ENCODE measurements at regions of chr17 and their contacts with region 1.

Region 1: DNA sequence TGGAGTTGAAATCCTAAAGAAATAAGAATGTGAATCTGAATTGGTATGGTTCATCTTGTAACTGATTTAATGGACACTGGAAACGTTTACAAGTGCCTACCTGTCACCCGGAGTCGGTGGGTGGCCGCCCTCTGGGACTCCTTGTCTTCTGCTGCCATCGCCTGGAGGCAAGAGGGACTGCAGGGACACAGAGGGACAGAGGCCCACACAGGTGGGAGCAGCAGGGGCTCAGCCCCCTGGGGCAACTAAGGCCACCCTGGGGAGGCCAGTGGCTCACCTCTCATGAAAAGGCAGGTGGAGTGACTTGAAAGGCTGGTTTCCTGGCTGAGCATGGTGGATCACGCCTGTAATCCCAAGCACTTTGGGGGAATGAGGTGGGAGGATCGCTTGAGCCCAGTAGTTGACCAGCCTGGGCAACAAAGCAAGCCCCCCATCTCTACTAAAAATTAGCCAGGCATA is 23.2 kb downstream of the TMEM92 start:
- DNase-seq: peak; percentile 67
- ATAC-seq: peak; percentile 100
- H3K4me3 Mint-ChIP-seq: no peak overlapping the region
- H3K27ac Mint-ChIP-seq: no peak overlapping the region
- H3K4me1 Mint-ChIP-seq: no peaks in the 10 kb centered on the region
- H3K27me3 Mint-ChIP-seq: peaks cover 17% of the 10 kb centered on the region
- CTCF ChIP-seq: peak; percentile 21

Region 2: GRCh38 chr17:49861150-49861892 is 436.1 kb before region 1 on chr17:
- CTCF ChIA-PET with region 1: no interaction called
- POLR2A ChIA-PET with region 1: no interaction called
- intact Hi-C with region 1: loop called (anchors 10 kb)
- DNase-seq: peak; percentile 40
- ATAC-seq: peak; percentile 78
- H3K4me3 Mint-ChIP-seq: no peak overlapping the region
- H3K27ac Mint-ChIP-seq: no peak overlapping the region
- H3K4me1 Mint-ChIP-seq: no peaks in the 10 kb centered on the region
- H3K27me3 Mint-ChIP-seq: peaks cover 30% of the 10 kb centered on the region
- CTCF ChIP-seq: peak; percentile 17

Region 3: GRCh38 chr17:50269477-50270434 is 27.7 kb before region 1 on chr17:
- CTCF ChIA-PET with region 1: interaction called, 6 read pairs
- POLR2A ChIA-PET with region 1: no interaction called
- intact Hi-C with region 1: loop called (anchors 1 kb)
- DNase-seq: peak; percentile 31
- ATAC-seq: peak; percentile 76
- H3K4me3 Mint-ChIP-seq: no peak overlapping the region
- H3K27ac Mint-ChIP-seq: no peak overlapping the region
- H3K4me1 Mint-ChIP-seq: peaks cover 6% of the 10 kb centered on the region
- H3K27me3 Mint-ChIP-seq: peaks cover 26% of the 10 kb centered on the region
- CTCF ChIP-seq: no peak

Region 4: GRCh38 chr17:52158450-52159042 is 1861.1 kb after region 1 on chr17 and contains the start of gene CA10:
- CTCF ChIA-PET with region 1: no interaction called
- POLR2A ChIA-PET with region 1: no interaction called
- intact Hi-C with region 1: no loop called
- DNase-seq: no peak
- ATAC-seq: no peak
- H3K4me3 Mint-ChIP-seq: no peak within 1 kb of the TSS
- H3K27ac Mint-ChIP-seq: no peak within 1 kb of the TSS
- H3K4me1 Mint-ChIP-seq: no peaks in the 10 kb centered on the region
- H3K27me3 Mint-ChIP-seq: peaks cover 32% of the 10 kb centered on the region
- CTCF ChIP-seq: no peak
- total RNA-seq, gene CA10: not detected in 2 replicates